ENCODE measurements at regions of chr1 and their contacts with region 1.

Region 1: GRCh38 chr1:173420330-173420806 is 56.8 kb upstream of the PRDX6 start:
- DNase-seq: peak; percentile 76 to 83
- H3K4me3 ChIP-seq: no peak overlapping the region
- H3K4me1 ChIP-seq: no peaks in the 10 kb centered on the region
- H3K27me3 ChIP-seq: no peaks in the 10 kb centered on the region

Region 2: DNA sequence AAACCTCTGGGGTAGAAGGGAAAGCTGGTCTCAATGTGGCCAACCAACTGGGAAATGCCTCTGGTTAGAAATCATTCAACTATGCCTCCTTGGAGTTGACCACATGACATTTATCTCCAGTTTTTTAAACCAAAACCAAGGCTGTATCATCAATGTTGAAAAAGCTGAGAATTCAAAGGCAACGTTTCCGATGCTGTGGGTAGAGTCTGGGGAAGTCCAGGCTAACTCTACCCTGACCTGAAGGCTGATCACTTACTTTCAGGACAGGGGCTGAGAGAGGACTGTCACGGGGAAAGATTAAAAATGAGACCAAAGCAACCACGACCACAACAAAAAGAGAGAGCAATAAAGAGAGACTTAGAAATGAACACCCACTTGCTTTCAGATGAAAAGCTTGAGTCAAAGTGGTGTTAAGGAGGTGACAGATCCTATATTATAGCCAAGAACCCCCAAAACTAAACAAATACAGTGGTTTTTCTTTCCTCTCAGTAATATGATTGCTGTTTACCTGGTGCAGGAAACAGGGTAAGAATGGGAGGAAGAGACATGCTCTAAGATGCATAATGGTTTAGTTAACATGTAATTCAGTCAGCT is 122.5 kb before region 1 on chr1:
- in situ Hi-C with region 1: no loop called
- DNase-seq: no peak
- H3K4me3 ChIP-seq: no peak overlapping the region
- H3K4me1 ChIP-seq: no peaks in the 10 kb centered on the region
- H3K27me3 ChIP-seq: no peaks in the 10 kb centered on the region; the same call in 1 of the 2 replicates

Region 3: GRCh38 chr1:174074757-174075156 is 654.4 kb after region 1 on chr1:
- in situ Hi-C with region 1: loop called (anchors 25 kb)
- DNase-seq: peak in 1 of 2 experiments; percentile 19
- H3K4me3 ChIP-seq: no peak overlapping the region
- H3K4me1 ChIP-seq: peaks cover 11% of the 10 kb centered on the region
- H3K27me3 ChIP-seq: no peaks in the 10 kb centered on the region

Region 4: GRCh38 chr1:174743654-174744561 is 1323.5 kb after region 1 on chr1:
- in situ Hi-C with region 1: loop called (anchors 25 kb)
- DNase-seq: peak in 1 of 2 experiments; percentile 43
- H3K4me3 ChIP-seq: no peak overlapping the region
- H3K4me1 ChIP-seq: no peaks in the 10 kb centered on the region
- H3K27me3 ChIP-seq: no peaks in the 10 kb centered on the region; the same call in 1 of the 2 replicates